ENCODE measurements at regions of chr4 and their contacts with region 1.

Region 1: DNA sequence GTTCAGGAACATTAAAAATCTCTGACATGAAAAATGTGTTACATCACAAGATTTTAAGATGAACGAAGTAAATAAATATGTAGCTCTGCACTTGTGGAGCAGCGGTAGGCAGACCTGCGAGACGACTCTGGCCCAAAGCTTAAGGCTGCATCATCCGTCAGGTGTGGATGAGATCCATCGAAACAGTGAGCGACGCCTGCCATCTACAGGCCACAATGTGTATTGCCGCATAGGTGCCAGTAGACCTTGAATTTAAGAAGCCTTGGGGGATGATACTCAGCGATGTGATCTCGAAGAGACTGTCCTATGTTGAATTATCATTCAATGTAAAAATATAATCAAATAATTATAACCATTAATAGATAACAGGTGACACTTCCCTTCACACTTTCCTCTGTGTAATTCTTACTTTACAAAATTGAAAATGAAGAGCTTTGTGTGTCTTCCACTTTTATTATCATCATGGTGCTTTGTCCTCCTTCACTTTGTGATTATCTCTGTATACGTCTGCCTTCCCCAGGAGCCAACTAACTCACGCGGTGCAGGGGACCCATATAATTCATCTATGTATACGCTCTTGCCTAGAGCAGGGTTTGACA is 851.0 kb downstream of the RAB28 start:
- DNase-seq: peak; percentile 69 to 73
- ATAC-seq: peak; percentile 46 to 93 (median 82)
- H3K4me3 ChIP-seq: no peak overlapping the region
- H3K27ac ChIP-seq: no peak overlapping the region
- H3K4me1 ChIP-seq: no peaks in the 10 kb centered on the region
- H3K27me3 ChIP-seq: no peaks in the 10 kb centered on the region
- CTCF ChIP-seq: peak; percentile 66 to 93 (median 88)

Region 2: DNA sequence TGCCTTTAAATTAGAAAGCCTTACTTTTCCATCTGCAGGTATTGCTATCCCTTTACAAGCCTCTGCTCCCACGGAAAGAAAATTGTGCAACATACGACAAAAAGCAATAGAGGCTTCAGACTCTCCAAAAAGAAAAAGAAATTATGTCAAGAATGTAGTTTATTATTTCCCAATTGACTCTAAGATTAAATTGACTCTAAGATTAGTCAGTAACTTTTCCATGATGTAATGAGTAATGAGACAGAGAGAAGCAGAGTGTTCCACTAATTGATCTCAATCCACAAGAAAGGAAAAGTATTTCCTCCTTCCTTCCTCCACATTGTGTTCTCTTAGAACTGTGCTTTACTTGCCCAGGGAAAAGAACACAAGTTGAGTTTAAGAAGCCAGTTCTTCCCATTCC is 858.8 kb before region 1 on chr4:
- intact Hi-C with region 1: loop called in 3 of 10 experiments (anchors 5 to 10 kb)
- DNase-seq: no peak
- ATAC-seq: peak in 5 of 8 donors; percentile 19 to 76 (median 55)
- H3K4me3 ChIP-seq: no peak overlapping the region
- H3K27ac ChIP-seq: no peak overlapping the region
- H3K4me1 ChIP-seq: peaks cover 0 to 4% (median 0%) of the 10 kb centered on the region in 9 donors
- H3K27me3 ChIP-seq: no peaks in the 10 kb centered on the region
- CTCF ChIP-seq: no peak

Region 3: DNA sequence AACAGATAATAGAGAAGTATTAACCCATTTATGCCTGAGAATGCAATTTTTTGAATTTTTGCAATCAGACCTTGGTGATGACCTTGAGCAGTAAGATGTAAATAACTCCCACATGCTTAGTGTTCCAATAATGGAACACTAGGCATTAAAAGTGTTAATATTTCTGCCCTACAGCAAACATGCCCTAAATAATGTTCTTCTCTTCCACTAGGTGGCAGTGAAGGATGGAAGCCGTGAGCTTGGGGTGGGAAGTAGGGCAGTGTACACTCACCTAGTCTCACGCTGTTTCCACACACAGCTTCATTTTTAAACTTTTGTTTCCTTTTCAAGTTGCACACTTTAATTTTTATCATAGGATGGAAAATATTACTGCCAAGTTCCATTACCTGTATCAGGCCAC is 591.3 kb before region 1 on chr4:
- intact Hi-C with region 1: loop called in 8 of 10 experiments (anchors 2 to 10 kb)
- DNase-seq: no peak
- ATAC-seq: peak in 5 of 8 donors; percentile 55 to 68 (median 57)
- H3K4me3 ChIP-seq: no peak overlapping the region
- H3K27ac ChIP-seq: no peak overlapping the region
- H3K4me1 ChIP-seq: no peaks in the 10 kb centered on the region
- H3K27me3 ChIP-seq: no peaks in the 10 kb centered on the region
- CTCF ChIP-seq: peak in 8 of 9 donors; percentile 22 to 58 (median 48)

Region 4: GRCh38 chr4:12137575-12137974 is 495.6 kb before region 1 on chr4:
- intact Hi-C with region 1: no loop called
- DNase-seq: no peak
- ATAC-seq: no peak
- H3K4me3 ChIP-seq: no peak overlapping the region
- H3K27ac ChIP-seq: no peak overlapping the region
- H3K4me1 ChIP-seq: no peaks in the 10 kb centered on the region
- H3K27me3 ChIP-seq: no peaks in the 10 kb centered on the region
- CTCF ChIP-seq: no peak

Region 5: DNA sequence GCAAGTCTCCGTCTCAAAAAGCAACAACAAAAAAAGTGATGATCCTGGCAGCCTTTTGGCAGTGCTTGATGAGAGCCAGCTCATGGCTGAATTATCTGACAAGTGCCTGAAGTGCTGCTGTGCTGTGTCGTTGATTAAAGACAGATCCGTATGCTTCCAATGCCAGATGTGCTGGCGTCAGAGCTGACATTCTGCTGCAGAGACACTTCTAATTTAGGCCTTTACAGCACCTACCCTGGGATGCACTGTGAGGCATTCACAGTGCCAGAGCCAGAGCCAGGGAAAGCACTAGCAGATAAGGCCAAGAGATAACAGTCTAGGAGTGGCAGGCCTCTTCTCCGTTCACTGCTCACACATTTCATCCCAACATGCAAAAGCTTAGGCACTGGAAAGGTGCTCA is 144.5 kb before region 1 on chr4:
- intact Hi-C with region 1: loop called in 1 of 10 experiments (anchors 10 kb)
- DNase-seq: peak; percentile 48 to 74
- ATAC-seq: peak; percentile 88 to 99 (median 98)
- H3K4me3 ChIP-seq: no peak overlapping the region
- H3K27ac ChIP-seq: peak overlapping the region in 9 of 10 donors; percentile 55 to 78 (median 66)
- H3K4me1 ChIP-seq: peaks cover 0 to 18% (median 2%) of the 10 kb centered on the region in 9 donors
- H3K27me3 ChIP-seq: no peaks in the 10 kb centered on the region
- CTCF ChIP-seq: no peak

Region 6: DNA sequence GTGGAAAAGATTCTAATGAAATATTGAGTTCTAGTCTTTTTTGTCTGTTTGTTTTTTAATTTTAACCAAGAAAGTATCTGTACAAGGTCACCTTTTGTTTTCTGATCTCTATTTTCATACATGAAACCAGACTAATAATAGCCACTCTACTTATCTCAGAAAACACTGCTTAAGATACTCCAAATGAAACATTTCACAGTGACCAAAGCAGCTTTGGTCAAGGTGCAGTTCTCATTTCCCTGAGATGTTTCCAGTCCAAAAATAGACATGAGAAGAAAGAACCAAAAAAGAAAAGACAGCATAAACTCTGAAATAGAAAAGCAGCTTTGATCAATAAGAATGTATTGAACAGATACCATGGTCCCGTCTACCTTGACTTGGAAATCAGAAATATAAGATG is 68.2 kb after region 1 on chr4:
- intact Hi-C with region 1: no loop called
- DNase-seq: no peak
- ATAC-seq: no peak
- H3K4me3 ChIP-seq: no peak overlapping the region
- H3K27ac ChIP-seq: no peak overlapping the region
- H3K4me1 ChIP-seq: peaks cover 0 to 4% (median 0%) of the 10 kb centered on the region in 9 donors
- H3K27me3 ChIP-seq: peaks cover 0 to 3% (median 0%) of the 10 kb centered on the region in 7 donors
- CTCF ChIP-seq: no peak